Activated naive CD4-positive, alpha-beta T cell treated with anti-CD3 and anti-CD28 coated beads for 36 hours (primary cell): ENCODE measurements at regions of chr15 and their contacts with region 1.

Region 1: DNA sequence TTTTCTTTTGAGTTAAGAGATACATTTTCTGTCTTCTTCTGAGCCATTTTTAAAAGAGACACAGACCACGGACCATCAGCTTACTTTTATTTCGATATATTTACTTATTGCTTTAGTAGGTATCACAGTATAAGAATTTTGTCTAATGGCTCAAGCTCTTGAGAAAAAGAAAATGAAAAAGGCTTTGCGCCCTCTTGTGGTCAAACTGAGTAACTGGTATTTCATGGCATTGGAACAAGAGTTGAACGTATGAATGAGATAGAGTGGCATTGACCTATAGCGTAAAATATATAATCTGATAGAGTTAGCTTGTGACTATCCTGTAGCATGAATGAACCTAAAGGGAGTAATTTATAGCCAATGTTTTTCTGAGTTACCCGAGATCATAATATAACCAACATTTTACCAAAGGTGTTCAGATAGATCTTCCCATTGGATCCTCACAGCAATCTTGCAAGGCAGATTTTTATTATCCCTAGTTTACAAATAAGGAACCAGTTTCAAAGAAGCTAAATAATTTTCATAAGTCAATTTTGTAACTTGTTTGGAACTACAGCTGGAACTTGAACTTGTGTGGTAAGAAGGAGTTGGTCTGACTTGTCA is 154.6 kb downstream of the POLR2M start:
- DNase-seq: peak; percentile 58
- H3K4me3 Mint-ChIP-seq: no peak overlapping the region
- H3K27ac Mint-ChIP-seq: no peak overlapping the region
- H3K4me1 Mint-ChIP-seq: peaks cover 3% of the 10 kb centered on the region
- H3K27me3 Mint-ChIP-seq: peaks cover 9% of the 10 kb centered on the region

Region 2: GRCh38 chr15:57640935-57641682 is 220.0 kb before region 1 on chr15:
- CTCF ChIA-PET with region 1: interaction called, 11 read pairs
- intact Hi-C with region 1: loop called (anchors 2 kb)
- DNase-seq: peak; percentile 28
- H3K4me3 Mint-ChIP-seq: no peak overlapping the region
- H3K27ac Mint-ChIP-seq: no peak overlapping the region
- H3K4me1 Mint-ChIP-seq: peaks cover 7% of the 10 kb centered on the region
- H3K27me3 Mint-ChIP-seq: no peaks in the 10 kb centered on the region

Region 3: GRCh38 chr15:57732526-57733331 is 128.4 kb before region 1 on chr15:
- CTCF ChIA-PET with region 1: interaction called, 33 read pairs
- intact Hi-C with region 1: loop called (anchors 5 kb)
- DNase-seq: peak; percentile 69
- H3K4me3 Mint-ChIP-seq: no peak overlapping the region
- H3K27ac Mint-ChIP-seq: no peak overlapping the region
- H3K4me1 Mint-ChIP-seq: peaks cover 8% of the 10 kb centered on the region
- H3K27me3 Mint-ChIP-seq: no peaks in the 10 kb centered on the region

Region 4: GRCh38 chr15:57743424-57743823 is 117.7 kb before region 1 on chr15:
- CTCF ChIA-PET with region 1: interaction called, 77 read pairs
- intact Hi-C with region 1: no loop called
- DNase-seq: peak; percentile 11
- H3K4me3 Mint-ChIP-seq: no peak overlapping the region
- H3K27ac Mint-ChIP-seq: no peak overlapping the region
- H3K4me1 Mint-ChIP-seq: peaks cover 5% of the 10 kb centered on the region
- H3K27me3 Mint-ChIP-seq: no peaks in the 10 kb centered on the region

Region 5: DNA sequence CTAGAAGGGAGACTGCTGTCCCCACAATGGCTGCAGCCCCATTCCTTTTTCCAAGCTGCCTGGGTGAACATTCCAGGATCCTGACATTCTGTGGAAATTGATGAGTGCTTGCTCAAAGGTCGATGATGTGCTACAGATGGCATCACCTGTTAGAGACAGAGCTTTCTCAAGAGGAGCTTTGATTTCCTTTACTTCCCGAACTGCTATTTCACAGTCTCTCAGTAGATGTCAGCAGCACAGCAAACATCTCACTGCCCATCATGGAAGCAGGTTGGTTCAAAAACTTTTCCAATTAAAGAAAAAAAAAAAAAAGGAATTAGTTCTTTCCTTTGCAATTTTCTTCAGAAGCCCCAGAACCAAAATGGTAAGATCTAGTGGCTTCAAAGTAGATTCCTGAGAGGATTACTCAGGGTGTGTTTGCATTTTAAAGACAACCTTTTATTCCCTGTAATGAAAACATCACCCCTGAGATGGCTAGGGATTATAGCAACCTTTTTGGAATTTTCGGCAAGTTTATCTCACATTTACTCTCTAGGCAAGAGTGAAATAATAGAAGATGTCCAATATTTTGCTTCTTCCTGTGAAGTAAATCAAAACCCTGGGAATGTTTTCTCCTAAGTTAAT is 109.8 kb before region 1 on chr15:
- CTCF ChIA-PET with region 1: interaction called, 77 read pairs
- intact Hi-C with region 1: loop called (anchors 1 kb)
- DNase-seq: peak; percentile 15
- H3K4me3 Mint-ChIP-seq: no peak overlapping the region
- H3K27ac Mint-ChIP-seq: no peak overlapping the region
- H3K4me1 Mint-ChIP-seq: peaks cover 5% of the 10 kb centered on the region
- H3K27me3 Mint-ChIP-seq: no peaks in the 10 kb centered on the region

Region 6: DNA sequence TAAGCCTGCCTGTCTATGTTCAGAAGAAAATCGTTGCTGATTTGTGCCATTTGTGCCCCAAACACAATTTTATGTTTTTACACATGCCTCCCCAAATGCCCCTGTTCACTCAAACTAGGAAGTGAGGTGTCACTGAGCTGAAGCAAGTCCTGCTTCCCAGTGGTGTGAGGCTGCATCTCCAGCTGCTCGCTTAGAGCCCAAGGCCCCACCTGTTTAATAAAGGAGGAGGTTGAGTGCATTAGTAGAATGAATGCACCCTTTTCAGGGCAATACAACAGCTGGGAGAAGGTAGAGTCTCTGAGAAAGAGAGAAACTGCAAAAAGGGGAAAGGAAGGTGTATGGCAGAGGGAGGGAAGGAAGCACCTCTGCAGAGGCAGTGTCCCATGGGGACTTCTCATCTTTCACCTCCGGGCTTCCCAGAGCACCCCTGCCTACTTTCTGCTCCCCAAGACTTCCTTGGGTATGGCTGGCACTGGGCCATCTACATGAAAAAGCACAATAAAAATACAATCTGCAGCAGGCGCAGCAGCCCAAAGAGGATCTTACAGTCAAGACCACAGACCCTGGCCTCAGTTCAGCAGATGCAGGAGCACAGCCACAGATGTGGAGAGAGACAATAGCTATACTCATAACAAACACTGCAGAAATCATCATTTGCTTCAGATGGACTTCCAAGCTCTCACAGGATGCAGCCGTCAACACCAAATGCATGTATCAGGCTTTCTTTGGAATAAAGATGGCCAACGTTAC is 11.3 kb after region 1 on chr15:
- CTCF ChIA-PET with region 1: interaction called, 15 read pairs
- intact Hi-C with region 1: no loop called
- DNase-seq: no peak
- H3K4me3 Mint-ChIP-seq: no peak overlapping the region
- H3K27ac Mint-ChIP-seq: no peak overlapping the region
- H3K4me1 Mint-ChIP-seq: no peaks in the 10 kb centered on the region
- H3K27me3 Mint-ChIP-seq: peaks cover 38% of the 10 kb centered on the region

Region 7: DNA sequence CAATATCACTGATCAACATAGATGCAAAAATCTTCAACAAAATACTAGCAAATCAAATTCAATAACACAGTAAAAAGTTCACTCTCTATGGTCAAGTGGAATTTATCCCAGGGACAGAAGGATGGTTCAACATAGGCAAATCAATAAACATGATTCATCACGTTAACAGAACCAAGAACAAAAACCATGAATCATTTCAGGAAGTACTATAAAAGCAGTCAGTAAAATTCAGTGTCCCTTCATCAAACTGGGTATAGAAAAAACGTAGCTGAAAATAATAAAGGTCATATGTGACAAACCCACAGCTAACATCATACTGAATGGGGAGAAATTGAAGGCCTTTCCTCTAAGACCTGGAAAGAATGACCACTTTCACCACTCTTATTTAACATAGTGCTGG is 17.4 kb after region 1 on chr15:
- CTCF ChIA-PET with region 1: interaction called, 10 read pairs
- intact Hi-C with region 1: no loop called
- DNase-seq: no peak
- H3K4me3 Mint-ChIP-seq: no peak overlapping the region
- H3K27ac Mint-ChIP-seq: no peak overlapping the region
- H3K4me1 Mint-ChIP-seq: no peaks in the 10 kb centered on the region
- H3K27me3 Mint-ChIP-seq: peaks cover 3% of the 10 kb centered on the region

Region 8: GRCh38 chr15:58139276-58139988 is 278.3 kb after region 1 on chr15:
- CTCF ChIA-PET with region 1: no interaction called
- intact Hi-C with region 1: no loop called
- DNase-seq: no peak
- H3K4me3 Mint-ChIP-seq: no peak overlapping the region
- H3K27ac Mint-ChIP-seq: no peak overlapping the region
- H3K4me1 Mint-ChIP-seq: no peaks in the 10 kb centered on the region
- H3K27me3 Mint-ChIP-seq: peaks cover 2% of the 10 kb centered on the region